HepG2 (cell line): ENCODE measurements at regions of chr4 and their contacts with region 1.

Region 1: GRCh38 chr4:110005461-110006056 is 92.9 kb downstream of the EGF start:
- DNase-seq: peak; percentile 60
- ATAC-seq: peak; percentile 50
- H3K4me3 ChIP-seq: no peak overlapping the region
- H3K27ac ChIP-seq: no peak overlapping the region
- H3K4me1 ChIP-seq: peaks cover 29% of the 10 kb centered on the region
- H3K27me3 ChIP-seq: no peaks in the 10 kb centered on the region
- CTCF ChIP-seq: peak; percentile 77
- EP300 ChIP-seq: no peak
- POLR2A ChIP-seq: no peak
- RAD21 ChIP-seq: peak; percentile 45; the same call in 1 of the 2 replicates

Region 2: GRCh38 chr4:110193822-110194761 is 188.5 kb after region 1 on chr4:
- CTCF ChIA-PET with region 1: no interaction called
- POLR2A ChIA-PET with region 1: no interaction called
- in situ Hi-C with region 1: no loop called
- intact Hi-C with region 1: loop called (anchors 5 kb)
- DNase-seq: peak; percentile 74
- ATAC-seq: peak; percentile 61
- H3K4me3 ChIP-seq: no peak overlapping the region; a peak in 1 of 6 replicates
- H3K27ac ChIP-seq: peak overlapping the region; percentile 65
- H3K4me1 ChIP-seq: peaks cover 50% of the 10 kb centered on the region
- H3K27me3 ChIP-seq: no peaks in the 10 kb centered on the region; a peak in 1 of 5 replicates
- CTCF ChIP-seq: no peak
- EP300 ChIP-seq: no peak
- POLR2A ChIP-seq: peak; percentile 78 to 89
- RAD21 ChIP-seq: no peak

Region 3: DNA sequence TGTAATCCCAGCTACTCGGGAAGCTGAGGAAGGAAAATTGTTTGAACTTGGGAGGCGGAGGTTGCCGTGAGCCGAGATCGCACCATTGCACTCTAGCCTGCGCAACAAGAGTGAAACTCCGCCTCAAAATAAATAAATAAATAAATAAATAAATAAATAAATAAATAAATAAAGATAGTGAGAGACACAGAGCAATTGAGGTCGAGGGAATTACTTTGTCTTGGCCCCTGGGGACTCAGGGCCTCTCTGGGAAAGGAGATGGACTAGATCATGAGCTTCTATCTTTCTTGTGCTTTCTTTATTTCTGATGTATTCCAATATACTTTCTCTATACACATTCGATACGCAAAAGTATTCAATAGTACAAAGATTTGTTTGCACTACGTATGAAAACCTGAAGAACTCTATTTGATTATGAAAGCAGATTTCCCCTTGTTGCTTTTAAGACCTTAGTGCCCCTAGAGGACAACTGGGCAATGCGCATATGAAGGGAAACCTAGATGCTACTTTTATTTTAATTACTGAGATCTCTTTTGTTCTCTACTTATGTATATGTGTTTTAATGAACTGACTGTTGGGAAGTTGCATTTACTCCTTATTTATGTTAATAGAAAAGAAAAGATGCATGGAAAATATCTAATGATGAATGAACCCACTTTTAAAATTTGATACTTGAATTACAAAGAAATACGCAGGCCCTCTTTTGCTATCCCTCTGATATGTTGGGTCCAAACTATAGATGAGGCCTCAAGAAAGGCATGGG is 205.6 kb after region 1 on chr4:
- CTCF ChIA-PET with region 1: interaction called, 6 read pairs
- POLR2A ChIA-PET with region 1: no interaction called
- in situ Hi-C with region 1: no loop called
- intact Hi-C with region 1: loop called (anchors 1 kb)
- DNase-seq: peak; percentile 53
- ATAC-seq: peak; percentile 81
- H3K4me3 ChIP-seq: peak overlapping the region in 1 of 3 experiments; percentile 15; a peak in 2 of 6 replicates
- H3K27ac ChIP-seq: no peak overlapping the region
- H3K4me1 ChIP-seq: no peaks in the 10 kb centered on the region
- H3K27me3 ChIP-seq: no peaks in the 10 kb centered on the region
- CTCF ChIP-seq: peak; percentile 56
- EP300 ChIP-seq: no peak
- POLR2A ChIP-seq: no peak
- RAD21 ChIP-seq: 0 out of 2 replicates have a peak, but pooled peaks have one; percentile 25

Region 4: DNA sequence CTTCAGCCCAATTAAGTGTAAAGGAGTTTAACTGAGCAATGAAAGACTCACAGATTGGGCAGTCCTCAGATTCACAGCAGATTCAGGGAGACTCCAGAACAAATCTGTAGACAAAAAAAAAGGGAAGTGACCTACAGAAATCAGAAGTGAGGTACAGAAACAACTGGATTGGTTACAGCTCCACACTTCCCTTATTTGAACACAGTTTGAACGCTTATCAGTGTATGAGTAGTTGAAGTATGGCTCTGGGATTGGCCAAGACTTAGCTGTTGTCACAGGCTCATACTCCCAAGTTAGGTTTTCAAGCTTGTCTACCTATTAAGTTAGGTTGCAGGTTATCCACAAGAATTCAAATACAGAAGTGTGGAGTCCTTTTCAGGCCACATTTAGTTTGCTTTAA is 305.2 kb after region 1 on chr4:
- CTCF ChIA-PET with region 1: no interaction called
- POLR2A ChIA-PET with region 1: no interaction called
- in situ Hi-C with region 1: loop called (anchors 10 kb)
- intact Hi-C with region 1: no loop called
- DNase-seq: no peak
- ATAC-seq: no peak
- H3K4me3 ChIP-seq: no peak overlapping the region
- H3K27ac ChIP-seq: no peak overlapping the region
- H3K4me1 ChIP-seq: no peaks in the 10 kb centered on the region
- H3K27me3 ChIP-seq: no peaks in the 10 kb centered on the region
- CTCF ChIP-seq: no peak
- EP300 ChIP-seq: no peak
- POLR2A ChIP-seq: no peak
- RAD21 ChIP-seq: no peak

Region 5: GRCh38 chr4:110344162-110344561 is 338.6 kb after region 1 on chr4:
- CTCF ChIA-PET with region 1: no interaction called
- POLR2A ChIA-PET with region 1: no interaction called
- in situ Hi-C with region 1: no loop called
- intact Hi-C with region 1: loop called (anchors 5 kb)
- DNase-seq: no peak
- ATAC-seq: peak; percentile 66
- H3K4me3 ChIP-seq: no peak overlapping the region
- H3K27ac ChIP-seq: no peak overlapping the region
- H3K4me1 ChIP-seq: no peaks in the 10 kb centered on the region
- H3K27me3 ChIP-seq: no peaks in the 10 kb centered on the region
- CTCF ChIP-seq: 0 out of 2 replicates have a peak, but pooled peaks have one; percentile 21
- EP300 ChIP-seq: no peak
- POLR2A ChIP-seq: no peak
- RAD21 ChIP-seq: no peak

Region 6: DNA sequence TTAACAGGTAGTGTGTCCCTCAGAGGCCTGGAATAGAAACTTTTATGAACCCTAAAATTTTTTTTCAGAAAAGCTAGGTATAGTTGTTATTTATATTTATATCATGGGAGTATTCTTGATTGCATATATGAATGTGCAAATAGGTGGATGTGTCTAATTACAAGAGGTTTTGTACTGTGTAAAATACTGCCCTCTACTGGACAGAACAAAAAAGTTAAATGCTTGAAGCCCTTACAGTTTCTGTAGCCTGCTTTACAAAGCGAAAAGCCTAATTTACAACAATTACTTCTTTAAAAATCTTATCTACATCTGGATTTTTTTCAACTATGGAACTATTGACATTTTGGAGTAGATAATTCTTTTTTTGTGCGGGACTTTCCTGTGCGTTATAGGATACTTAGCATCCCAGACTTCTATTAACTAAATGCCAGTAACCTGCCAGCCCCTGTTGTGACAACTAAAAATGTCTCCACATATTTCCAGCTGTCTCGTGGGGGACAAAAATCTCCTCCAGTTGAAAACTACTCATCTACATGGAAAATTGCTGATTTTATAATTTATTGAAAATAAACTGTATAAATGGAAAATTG is 505.5 kb after region 1 on chr4:
- CTCF ChIA-PET with region 1: interaction called, 100 read pairs
- POLR2A ChIA-PET with region 1: no interaction called
- in situ Hi-C with region 1: loop called (anchors 5 kb)
- intact Hi-C with region 1: loop called (anchors 1 kb)
- DNase-seq: peak; percentile 39
- ATAC-seq: peak; percentile 60
- H3K4me3 ChIP-seq: no peak overlapping the region
- H3K27ac ChIP-seq: no peak overlapping the region
- H3K4me1 ChIP-seq: peaks cover 7% of the 10 kb centered on the region; the same call in 1 of the 2 replicates
- H3K27me3 ChIP-seq: no peaks in the 10 kb centered on the region
- CTCF ChIP-seq: peak; percentile 56
- EP300 ChIP-seq: no peak
- POLR2A ChIP-seq: no peak
- RAD21 ChIP-seq: peak; percentile 21; the same call in 1 of the 2 replicates